ENCODE measurements at regions of chr16 and their contacts with region 1.

Region 1: DNA sequence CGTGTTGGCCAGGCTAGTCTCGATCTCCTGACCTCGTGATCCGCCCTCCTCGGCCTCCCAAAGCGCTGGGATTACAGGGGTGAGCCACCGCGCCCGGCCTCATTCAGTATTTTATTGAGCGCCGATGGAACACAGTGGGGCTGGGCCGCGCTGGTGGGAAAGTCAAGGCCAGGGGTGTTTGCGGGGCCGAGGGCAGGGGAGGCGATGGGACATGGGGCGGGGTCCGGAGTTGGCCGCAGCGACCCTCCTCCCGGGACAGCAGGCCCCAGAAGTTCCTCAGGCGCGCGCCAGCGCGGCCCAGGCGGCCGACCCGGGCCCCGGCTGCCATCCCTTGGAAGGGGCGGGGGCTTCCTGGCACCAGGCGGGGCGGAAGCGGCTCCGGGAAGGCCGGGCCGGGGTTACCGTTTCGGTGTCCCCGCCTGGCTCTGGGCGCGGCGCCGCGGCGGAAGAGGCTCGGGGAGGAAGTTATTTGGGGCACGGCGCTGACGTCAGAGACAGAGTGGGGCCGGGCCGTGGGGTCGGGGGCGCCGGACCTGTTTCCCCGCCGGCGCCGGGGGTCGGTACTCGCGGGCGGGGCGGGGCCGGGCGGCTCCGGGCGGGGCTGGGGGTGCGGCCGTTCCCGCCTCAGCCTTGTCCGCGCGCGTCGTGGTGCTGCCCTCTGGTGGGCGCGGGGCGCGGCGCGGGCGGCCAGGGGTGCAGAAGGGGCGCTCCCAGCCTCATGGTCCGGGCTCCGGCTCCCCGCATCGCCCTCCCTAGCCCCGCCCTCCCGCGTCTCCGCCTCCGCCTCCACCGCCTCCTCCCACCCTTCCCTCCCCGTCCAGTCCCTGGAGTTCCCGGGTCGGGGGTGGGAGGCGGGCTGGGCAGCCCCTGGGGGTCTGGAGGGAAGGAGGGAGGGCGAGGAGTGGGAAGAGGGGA is 952 bp upstream of the PRSS27 start:
- DNase-seq: peak; percentile 97
- H3K4me3 Mint-ChIP-seq: peak overlapping the region; percentile 86
- H3K27ac Mint-ChIP-seq: peak overlapping the region; percentile 89
- H3K4me1 Mint-ChIP-seq: peaks cover 2% of the 10 kb centered on the region
- H3K27me3 Mint-ChIP-seq: peaks cover 8% of the 10 kb centered on the region

Region 2: DNA sequence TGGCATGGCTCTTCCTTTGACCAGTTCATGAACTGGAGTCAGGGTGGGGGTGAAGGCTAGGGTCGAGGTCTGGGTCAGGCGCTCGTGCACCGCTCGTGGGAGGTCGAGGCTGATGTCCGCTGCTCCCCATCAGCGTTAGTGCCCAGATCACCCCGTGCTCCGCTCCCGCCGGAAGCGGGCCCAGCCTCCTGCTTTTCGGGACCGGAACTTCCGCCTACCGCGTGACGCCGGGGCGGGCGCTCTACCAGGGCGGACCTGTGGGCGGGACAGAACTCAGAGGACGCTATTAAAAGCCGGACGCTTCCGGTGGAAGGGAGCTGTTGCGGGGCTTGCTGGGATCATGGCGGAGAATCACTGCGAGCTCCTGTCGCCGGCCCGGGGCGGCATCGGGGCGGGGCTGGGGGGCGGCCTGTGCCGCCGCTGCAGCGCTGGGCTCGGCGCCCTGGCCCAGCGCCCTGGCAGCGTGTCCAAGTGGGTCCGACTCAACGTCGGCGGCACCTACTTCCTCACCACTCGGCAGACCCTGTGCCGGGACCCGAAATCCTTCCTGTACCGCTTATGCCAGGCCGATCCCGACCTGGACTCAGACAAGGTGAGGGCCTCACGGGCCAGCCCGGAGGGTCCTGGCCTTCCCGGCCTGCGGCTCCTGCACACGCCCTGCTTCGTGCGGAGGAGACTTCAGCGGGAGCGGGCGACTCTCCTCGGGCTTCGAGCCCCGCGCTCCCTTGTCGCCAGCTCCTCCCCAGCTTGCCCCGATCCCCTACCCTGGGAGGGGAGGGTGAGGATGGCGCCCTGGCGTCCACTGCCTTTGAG is 38.6 kb before region 1 on chr16 and contains the start of gene KCTD5:
- intact Hi-C with region 1: loop called (anchors 2 kb)
- DNase-seq: peak; percentile 99
- H3K4me3 Mint-ChIP-seq: peak within 1 kb of the TSS; percentile 100
- H3K27ac Mint-ChIP-seq: peak within 1 kb of the TSS; percentile 89
- H3K4me1 Mint-ChIP-seq: peaks cover 22% of the 10 kb centered on the region
- H3K27me3 Mint-ChIP-seq: no peaks in the 10 kb centered on the region
- total RNA-seq, gene KCTD5: 54.4 and 57.0 TPM in 2 replicates